ENCODE measurements at regions of chr12 and their contacts with region 1.

Region 1: GRCh38 chr12:64696080-64696741 is 63.0 kb downstream of the GNS start:
- DNase-seq: no peak
- H3K4me3 ChIP-seq: no peak overlapping the region
- H3K4me3 Mint-ChIP-seq: peak overlapping the region in 1 of 7 donors; percentile 3
- H3K27ac ChIP-seq: no peak overlapping the region
- H3K27ac Mint-ChIP-seq: peak overlapping the region; percentile 12 to 92 (median 62)
- H3K4me1 ChIP-seq: peaks cover 74% of the 10 kb centered on the region
- H3K4me1 Mint-ChIP-seq: peaks cover 69 to 86% (median 85%) of the 10 kb centered on the region in 3 donors
- H3K27me3 ChIP-seq: no peaks in the 10 kb centered on the region
- H3K27me3 Mint-ChIP-seq: no peaks in the 10 kb centered on the region

Region 2: GRCh38 chr12:64544371-64545080 is 151.7 kb before region 1 on chr12:
- CTCF ChIA-PET with region 1: interaction called, 100 read pairs
- POLR2A ChIA-PET with region 1: interaction called, 11 read pairs
- DNase-seq: no peak
- H3K4me3 ChIP-seq: no peak overlapping the region
- H3K4me3 Mint-ChIP-seq: no peak overlapping the region
- H3K27ac ChIP-seq: no peak overlapping the region
- H3K27ac Mint-ChIP-seq: no peak overlapping the region
- H3K4me1 ChIP-seq: peaks cover 3% of the 10 kb centered on the region
- H3K4me1 Mint-ChIP-seq: peaks cover 2 to 3% (median 2%) of the 10 kb centered on the region in 3 donors
- H3K27me3 ChIP-seq: no peaks in the 10 kb centered on the region
- H3K27me3 Mint-ChIP-seq: peaks cover 7 to 33% of the 10 kb centered on the region in 2 donors

Region 3: DNA sequence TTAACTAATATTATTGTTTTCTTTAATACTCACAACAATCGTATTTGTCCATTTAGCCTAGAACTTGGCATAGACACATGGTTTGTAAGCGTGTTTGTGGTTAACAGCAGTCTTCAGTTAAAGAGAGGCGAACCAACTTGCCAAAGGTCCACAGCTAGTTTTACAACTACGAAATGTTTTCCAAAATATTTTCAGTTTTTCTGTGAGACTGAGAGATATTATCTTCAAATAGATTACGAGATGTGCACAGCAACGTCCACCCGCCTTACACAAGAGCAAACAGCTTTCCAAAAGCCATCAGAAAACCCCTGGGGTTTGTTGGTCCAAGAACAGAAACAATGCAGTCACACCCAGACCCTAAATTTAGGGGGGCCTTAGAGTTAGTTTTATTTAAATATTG is 144.5 kb before region 1 on chr12:
- CTCF ChIA-PET with region 1: interaction called, 100 read pairs
- POLR2A ChIA-PET with region 1: interaction called, 11 read pairs
- DNase-seq: no peak
- H3K4me3 ChIP-seq: no peak overlapping the region
- H3K4me3 Mint-ChIP-seq: no peak overlapping the region
- H3K27ac ChIP-seq: no peak overlapping the region
- H3K27ac Mint-ChIP-seq: no peak overlapping the region
- H3K4me1 ChIP-seq: peaks cover 8% of the 10 kb centered on the region
- H3K4me1 Mint-ChIP-seq: peaks cover 7 to 8% (median 7%) of the 10 kb centered on the region in 3 donors
- H3K27me3 ChIP-seq: no peaks in the 10 kb centered on the region
- H3K27me3 Mint-ChIP-seq: no peaks in the 10 kb centered on the region

Region 4: GRCh38 chr12:64610149-64610678 is 86.0 kb before region 1 on chr12 and contains the start of gene RASSF3:
- CTCF ChIA-PET with region 1: interaction called, 16 read pairs
- POLR2A ChIA-PET with region 1: interaction called, 5 read pairs
- DNase-seq: peak; percentile 71 to 82 (median 77)
- H3K4me3 ChIP-seq: peak within 1 kb of the TSS; percentile 90
- H3K4me3 Mint-ChIP-seq: peak within 1 kb of the TSS; percentile 88 to 99 (median 98)
- H3K27ac ChIP-seq: peak within 1 kb of the TSS; percentile 82
- H3K27ac Mint-ChIP-seq: peak within 1 kb of the TSS; percentile 89 to 99 (median 95)
- H3K4me1 ChIP-seq: peaks cover 40% of the 10 kb centered on the region
- H3K4me1 Mint-ChIP-seq: peaks cover 29 to 53% (median 42%) of the 10 kb centered on the region in 3 donors
- H3K27me3 ChIP-seq: no peaks in the 10 kb centered on the region
- H3K27me3 Mint-ChIP-seq: no peaks in the 10 kb centered on the region
- total RNA-seq, gene RASSF3: 58.2 to 59.2 TPM

Region 5: DNA sequence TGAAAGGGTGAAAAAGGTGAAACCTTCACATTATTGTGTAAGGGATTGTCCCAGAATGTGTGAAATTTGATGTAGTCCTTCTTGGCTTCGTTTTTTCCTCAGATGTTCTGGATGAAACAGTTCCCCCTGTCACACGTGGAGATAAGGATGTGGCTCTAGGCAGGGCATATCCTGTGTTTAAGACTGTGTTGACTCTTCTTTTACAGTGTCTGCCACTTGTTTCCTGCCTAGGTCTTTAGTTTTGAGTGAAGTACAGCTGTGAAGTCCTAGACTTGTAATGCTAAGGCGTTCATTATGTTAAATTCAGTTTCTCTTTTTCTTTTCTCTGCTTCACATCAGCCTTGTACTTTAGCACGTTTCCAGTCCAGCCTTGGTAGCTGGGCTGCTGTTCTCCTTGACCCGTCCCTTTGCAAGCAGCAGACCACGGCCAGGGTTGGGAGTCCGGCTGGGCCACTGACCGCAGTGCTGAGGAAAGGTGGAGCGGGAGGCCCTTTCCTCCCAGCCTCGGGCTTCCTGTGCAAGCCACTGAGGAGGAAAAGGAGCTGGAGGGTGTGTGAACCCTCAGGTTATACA is 26.9 kb before region 1 on chr12:
- CTCF ChIA-PET with region 1: interaction called, 20 read pairs
- POLR2A ChIA-PET with region 1: interaction called, 11 read pairs
- DNase-seq: peak; percentile 28 to 85 (median 70)
- H3K4me3 ChIP-seq: peak overlapping the region; percentile 66
- H3K4me3 Mint-ChIP-seq: peak overlapping the region; percentile 85 to 94 (median 92)
- H3K27ac ChIP-seq: peak overlapping the region; percentile 79
- H3K27ac Mint-ChIP-seq: peak overlapping the region; percentile 91 to 99 (median 96)
- H3K4me1 ChIP-seq: peaks cover 99% of the 10 kb centered on the region
- H3K4me1 Mint-ChIP-seq: peaks cover 93 to 96% (median 95%) of the 10 kb centered on the region in 3 donors
- H3K27me3 ChIP-seq: no peaks in the 10 kb centered on the region
- H3K27me3 Mint-ChIP-seq: no peaks in the 10 kb centered on the region

Region 6: DNA sequence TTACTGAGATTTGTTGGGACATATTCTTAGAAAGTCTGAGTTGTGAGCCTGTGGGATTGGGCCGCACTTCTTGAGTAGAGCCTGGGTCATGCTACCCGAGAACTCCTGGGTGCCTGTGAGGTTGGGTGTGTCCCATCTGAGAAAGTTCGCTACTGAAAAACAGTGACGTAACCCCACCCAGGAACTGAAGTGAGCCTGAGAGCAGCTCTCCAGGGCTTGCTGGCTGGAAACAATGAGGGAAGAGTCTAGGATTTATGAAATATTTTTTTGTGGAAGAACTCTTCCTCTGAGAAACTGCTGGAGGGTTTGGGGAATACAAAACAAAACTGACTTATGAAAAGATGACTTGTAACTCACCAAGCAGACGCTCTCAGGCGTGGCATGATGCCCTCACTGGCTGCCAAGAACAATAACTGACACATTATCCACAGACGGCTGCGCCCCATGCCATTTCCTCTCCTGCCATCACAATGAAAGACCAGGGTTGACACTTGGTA is 16.7 kb before region 1 on chr12:
- CTCF ChIA-PET with region 1: interaction called, 24 read pairs
- POLR2A ChIA-PET with region 1: interaction called, 4 read pairs
- DNase-seq: peak; percentile 50 to 83 (median 79)
- H3K4me3 ChIP-seq: peak overlapping the region; percentile 42
- H3K4me3 Mint-ChIP-seq: peak overlapping the region; percentile 68 to 88 (median 78)
- H3K27ac ChIP-seq: peak overlapping the region; percentile 76
- H3K27ac Mint-ChIP-seq: peak overlapping the region; percentile 89 to 98 (median 96)
- H3K4me1 ChIP-seq: peaks cover 95% of the 10 kb centered on the region
- H3K4me1 Mint-ChIP-seq: peaks cover 86 to 98% (median 94%) of the 10 kb centered on the region in 3 donors
- H3K27me3 ChIP-seq: no peaks in the 10 kb centered on the region
- H3K27me3 Mint-ChIP-seq: peaks cover 0 to 4% of the 10 kb centered on the region in 2 donors

Region 7: GRCh38 chr12:64706306-64706705 is 10.1 kb after region 1 on chr12:
- CTCF ChIA-PET with region 1: interaction called, 17 read pairs
- POLR2A ChIA-PET with region 1: no interaction called
- DNase-seq: no peak
- H3K4me3 ChIP-seq: no peak overlapping the region
- H3K4me3 Mint-ChIP-seq: no peak overlapping the region
- H3K27ac ChIP-seq: no peak overlapping the region
- H3K27ac Mint-ChIP-seq: peak overlapping the region in 2 of 8 donors; percentile 23 to 36
- H3K4me1 ChIP-seq: peaks cover 10% of the 10 kb centered on the region
- H3K4me1 Mint-ChIP-seq: peaks cover 10 to 14% (median 12%) of the 10 kb centered on the region in 3 donors
- H3K27me3 ChIP-seq: no peaks in the 10 kb centered on the region
- H3K27me3 Mint-ChIP-seq: no peaks in the 10 kb centered on the region

Region 8: DNA sequence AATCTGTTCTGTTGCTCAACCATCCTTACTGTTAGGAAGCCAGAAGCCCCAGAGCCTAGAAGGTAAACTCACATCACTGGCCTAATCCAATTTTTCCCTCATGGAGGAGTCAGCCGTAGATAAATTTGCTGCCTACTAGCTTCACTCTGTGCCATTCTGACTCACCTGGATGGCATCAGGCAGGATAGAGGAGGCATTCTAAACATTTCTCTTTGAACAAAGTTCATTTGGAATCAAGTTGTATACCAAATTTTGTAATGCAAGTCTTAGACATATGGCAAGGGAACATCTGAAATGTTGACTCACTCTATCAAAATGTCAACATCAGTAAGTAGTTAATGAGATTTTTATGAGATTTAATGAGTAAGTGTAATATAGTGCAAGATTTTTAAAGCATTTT is 114.6 kb after region 1 on chr12:
- CTCF ChIA-PET with region 1: no interaction called
- POLR2A ChIA-PET with region 1: no interaction called
- DNase-seq: no peak
- H3K4me3 ChIP-seq: no peak overlapping the region
- H3K4me3 Mint-ChIP-seq: no peak overlapping the region
- H3K27ac ChIP-seq: no peak overlapping the region
- H3K27ac Mint-ChIP-seq: no peak overlapping the region
- H3K4me1 ChIP-seq: no peaks in the 10 kb centered on the region
- H3K4me1 Mint-ChIP-seq: peaks cover 0 to 4% (median 0%) of the 10 kb centered on the region in 3 donors
- H3K27me3 ChIP-seq: peaks cover 5% of the 10 kb centered on the region
- H3K27me3 Mint-ChIP-seq: peaks cover 17 to 62% of the 10 kb centered on the region in 2 donors